Astrocyte of the cerebellum (primary cell): ENCODE measurements at regions of chr10 and their contacts with region 1.

Region 1: GRCh38 chr10:25068152-25069058 is 52.0 kb downstream of the THNSL1 start:
- DNase-seq: no peak
- H3K4me3 ChIP-seq: no peak overlapping the region
- CTCF ChIP-seq: no peak

Region 2: GRCh38 chr10:25016376-25017154 is 51.8 kb before region 1 on chr10 and contains the start of gene THNSL1:
- in situ Hi-C with region 1: loop called (anchors 5 kb)
- DNase-seq: peak; percentile 97
- H3K4me3 ChIP-seq: peak within 1 kb of the TSS; percentile 59
- CTCF ChIP-seq: no peak

Region 3: DNA sequence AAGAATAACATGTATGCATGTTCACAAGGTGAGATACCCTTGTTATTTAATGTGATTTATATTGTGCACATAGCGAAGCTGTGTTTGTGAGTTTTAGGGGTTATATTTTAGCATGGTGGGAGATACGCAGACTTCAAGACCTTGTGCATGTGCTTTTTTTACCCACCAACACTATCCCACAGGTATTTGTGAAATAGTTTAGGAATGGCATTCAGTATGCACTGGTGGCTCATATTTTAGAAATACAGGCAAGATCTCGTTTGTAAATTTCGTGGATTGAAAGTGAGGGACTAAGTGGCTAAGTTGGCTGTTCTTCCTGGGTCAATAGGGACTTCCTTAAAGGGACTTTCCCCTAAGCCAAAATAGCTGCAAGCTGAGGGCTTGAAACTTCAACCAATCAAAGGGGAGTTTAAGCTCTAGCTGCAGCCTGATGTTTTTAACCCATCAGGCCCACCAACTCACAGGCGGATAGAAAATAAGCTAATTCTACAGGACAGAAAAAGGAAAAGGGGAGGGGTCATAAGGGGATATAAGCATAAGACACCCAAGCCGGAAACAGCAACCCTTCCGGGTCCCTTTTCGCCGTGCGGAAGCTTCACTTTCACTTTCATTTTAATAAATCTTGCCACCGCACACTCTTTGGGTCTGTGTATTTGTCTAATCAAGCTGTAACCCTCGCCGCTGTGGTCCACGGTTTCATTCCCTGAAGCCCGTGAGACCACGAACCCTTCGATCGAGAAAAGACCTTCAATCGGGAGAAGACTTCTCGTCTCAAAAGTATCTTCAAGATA is 397.4 kb after region 1 on chr10:
- in situ Hi-C with region 1: no loop called
- DNase-seq: no peak
- H3K4me3 ChIP-seq: no peak overlapping the region
- CTCF ChIP-seq: no peak